ENCODE measurements at regions of chr4 and their contacts with region 1.

Region 1: DNA sequence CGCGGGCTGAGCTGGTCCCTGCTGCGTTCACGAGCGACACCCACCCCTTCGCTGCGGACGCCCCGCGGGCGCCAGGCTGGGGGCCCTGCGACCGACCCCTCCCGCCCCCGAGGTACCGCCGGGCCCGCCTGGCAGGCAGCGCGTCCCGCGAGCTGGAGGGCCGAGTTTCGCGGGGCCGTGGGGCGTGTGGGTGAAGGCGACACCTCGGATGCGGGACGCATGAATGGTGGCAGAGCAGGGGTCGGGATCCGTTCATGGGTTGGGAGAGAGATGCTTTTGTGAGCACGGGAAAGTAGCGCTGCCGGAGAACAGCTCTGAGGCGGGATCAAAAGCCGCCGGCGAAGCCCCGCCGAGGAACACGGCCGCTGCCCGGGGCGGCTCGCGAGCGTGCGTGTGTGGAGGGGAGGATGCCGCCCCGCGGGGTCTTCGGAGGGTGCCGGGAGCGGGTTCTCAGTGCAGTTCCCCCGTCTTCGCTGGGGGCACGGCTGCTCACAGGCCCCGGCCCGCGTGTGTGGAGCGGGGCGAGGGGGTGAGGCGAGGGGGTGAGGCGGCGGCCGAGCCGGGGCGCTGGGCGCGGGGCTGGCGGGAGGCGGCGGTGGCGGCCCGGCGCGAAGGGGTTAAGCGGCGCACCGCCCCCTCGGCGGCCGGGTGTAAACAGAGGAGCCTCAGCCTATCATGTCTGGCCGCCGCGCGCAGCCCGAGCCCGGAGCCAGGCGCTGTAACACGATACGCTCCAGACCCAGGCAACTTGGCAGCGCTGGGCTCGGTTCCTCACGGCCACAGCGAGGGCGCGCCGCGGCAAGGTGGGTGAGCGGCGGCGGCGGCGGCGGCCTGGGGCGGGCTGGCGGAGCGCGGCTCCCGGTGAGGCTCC is 205.3 kb downstream of the TENM3 start:
- DNase-seq: peak; percentile 93
- ATAC-seq: peak; percentile 98
- H3K4me3 ChIP-seq: peak overlapping the region; percentile 62
- H3K27ac ChIP-seq: peak overlapping the region; percentile 50
- H3K4me1 ChIP-seq: no peaks in the 10 kb centered on the region
- H3K27me3 ChIP-seq: no peaks in the 10 kb centered on the region
- CTCF ChIP-seq: no peak
- POLR2A ChIP-seq: peak; percentile 61; the same call in 1 of the 2 replicates
- RAD21 ChIP-seq: 0 out of 2 replicates have a peak, but pooled peaks have one; percentile 13

Region 2: GRCh38 chr4:181143250-181143854 is 1305.2 kb before region 1 on chr4:
- CTCF ChIA-PET with region 1: no interaction called
- POLR2A ChIA-PET with region 1: no interaction called
- dilution Hi-C with region 1: no loop called
- in situ Hi-C with region 1: no loop called
- intact Hi-C with region 1: loop called (anchors 5 kb)
- DNase-seq: peak; percentile 72
- ATAC-seq: peak; percentile 77
- H3K4me3 ChIP-seq: no peak overlapping the region
- H3K27ac ChIP-seq: no peak overlapping the region
- H3K4me1 ChIP-seq: no peaks in the 10 kb centered on the region
- H3K27me3 ChIP-seq: no peaks in the 10 kb centered on the region
- CTCF ChIP-seq: peak; percentile 91
- POLR2A ChIP-seq: no peak
- RAD21 ChIP-seq: peak; percentile 90

Region 3: GRCh38 chr4:181569553-181569952 is 879.0 kb before region 1 on chr4:
- CTCF ChIA-PET with region 1: no interaction called
- POLR2A ChIA-PET with region 1: no interaction called
- dilution Hi-C with region 1: no loop called
- in situ Hi-C with region 1: no loop called
- intact Hi-C with region 1: loop called (anchors 10 kb)
- DNase-seq: peak; percentile 65
- ATAC-seq: peak; percentile 92
- H3K4me3 ChIP-seq: no peak overlapping the region
- H3K27ac ChIP-seq: no peak overlapping the region
- H3K4me1 ChIP-seq: peaks cover 2% of the 10 kb centered on the region; the same call in 1 of the 2 replicates
- H3K27me3 ChIP-seq: no peaks in the 10 kb centered on the region
- CTCF ChIP-seq: peak; percentile 69
- POLR2A ChIP-seq: no peak
- RAD21 ChIP-seq: peak; percentile 79

Region 4: GRCh38 chr4:181761156-181761555 is 687.4 kb before region 1 on chr4:
- CTCF ChIA-PET with region 1: no interaction called
- POLR2A ChIA-PET with region 1: no interaction called
- dilution Hi-C with region 1: no loop called
- in situ Hi-C with region 1: no loop called
- intact Hi-C with region 1: loop called (anchors 10 kb)
- DNase-seq: peak; percentile 95
- ATAC-seq: peak; percentile 83
- H3K4me3 ChIP-seq: no peak overlapping the region
- H3K27ac ChIP-seq: no peak overlapping the region
- H3K4me1 ChIP-seq: peaks cover 2% of the 10 kb centered on the region; the same call in 1 of the 2 replicates
- H3K27me3 ChIP-seq: no peaks in the 10 kb centered on the region
- CTCF ChIP-seq: no peak
- POLR2A ChIP-seq: no peak
- RAD21 ChIP-seq: peak; percentile 15; the same call in 1 of the 2 replicates

Region 5: GRCh38 chr4:181952478-181952877 is 496.0 kb before region 1 on chr4:
- CTCF ChIA-PET with region 1: no interaction called
- POLR2A ChIA-PET with region 1: no interaction called
- dilution Hi-C with region 1: no loop called
- in situ Hi-C with region 1: no loop called
- intact Hi-C with region 1: loop called (anchors 5 kb)
- DNase-seq: peak; percentile 96
- ATAC-seq: peak; percentile 85
- H3K4me3 ChIP-seq: no peak overlapping the region
- H3K27ac ChIP-seq: peak overlapping the region; percentile 39
- H3K4me1 ChIP-seq: peaks cover 6% of the 10 kb centered on the region
- H3K27me3 ChIP-seq: no peaks in the 10 kb centered on the region
- CTCF ChIP-seq: no peak
- POLR2A ChIP-seq: no peak
- RAD21 ChIP-seq: no peak

Region 6: GRCh38 chr4:182103614-182104319 is 344.7 kb before region 1 on chr4:
- CTCF ChIA-PET with region 1: no interaction called
- POLR2A ChIA-PET with region 1: no interaction called
- dilution Hi-C with region 1: no loop called
- in situ Hi-C with region 1: no loop called
- intact Hi-C with region 1: no loop called
- DNase-seq: no peak
- ATAC-seq: no peak
- H3K4me3 ChIP-seq: no peak overlapping the region
- H3K27ac ChIP-seq: no peak overlapping the region
- H3K4me1 ChIP-seq: no peaks in the 10 kb centered on the region
- H3K27me3 ChIP-seq: no peaks in the 10 kb centered on the region; the same call in 1 of the 2 replicates
- CTCF ChIP-seq: no peak
- POLR2A ChIP-seq: no peak
- RAD21 ChIP-seq: no peak

Region 7: DNA sequence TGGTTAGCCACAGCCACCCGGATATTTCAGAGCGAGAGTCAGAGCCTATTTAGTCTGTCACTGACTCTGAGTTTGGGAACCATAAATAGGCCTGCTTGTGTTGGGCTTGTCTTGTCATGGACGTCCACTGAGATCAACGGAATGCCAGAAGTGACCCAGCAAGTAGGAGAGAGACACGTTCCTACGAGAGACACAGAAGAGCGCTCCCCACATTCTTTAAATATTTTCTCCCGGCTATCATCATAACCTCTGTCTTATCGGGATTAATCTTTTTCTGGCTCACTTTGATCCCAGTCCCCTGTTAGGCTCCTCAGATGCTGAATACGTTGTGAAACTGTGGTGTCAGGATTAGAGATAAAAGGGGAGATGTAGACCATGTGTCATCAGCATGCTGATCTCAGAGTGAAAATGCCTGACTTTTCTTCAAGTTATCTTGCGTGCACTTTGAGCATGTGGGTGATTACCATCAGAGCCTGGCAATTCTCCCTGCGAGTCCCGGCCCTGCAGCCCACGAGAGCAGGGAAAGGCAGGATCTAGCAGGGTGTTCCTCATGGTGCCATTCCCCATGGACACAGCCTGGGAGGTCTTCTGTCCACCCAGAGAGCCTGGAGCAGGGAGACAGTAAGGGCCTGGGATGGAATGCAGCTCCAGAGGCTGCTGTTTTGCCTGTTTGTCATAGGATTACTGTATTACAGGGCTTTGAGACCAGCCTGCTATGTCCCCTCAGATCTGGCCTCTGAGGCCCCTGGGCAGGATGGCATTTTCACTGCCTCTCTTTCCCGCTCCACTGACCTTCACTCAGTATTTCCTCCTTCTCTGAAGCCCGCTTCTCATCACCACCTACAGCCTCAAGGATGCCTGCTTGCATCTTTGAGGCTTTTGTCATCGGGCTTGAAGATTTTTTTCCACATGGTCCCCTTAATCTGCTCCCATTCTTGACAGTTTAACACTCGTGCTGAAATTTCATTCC is 208.1 kb before region 1 on chr4:
- CTCF ChIA-PET with region 1: no interaction called
- POLR2A ChIA-PET with region 1: no interaction called
- dilution Hi-C with region 1: no loop called
- in situ Hi-C with region 1: no loop called
- intact Hi-C with region 1: loop called (anchors 5 kb)
- DNase-seq: peak; percentile 89
- ATAC-seq: peak; percentile 73
- H3K4me3 ChIP-seq: no peak overlapping the region; the same call in 1 of the 2 replicates
- H3K27ac ChIP-seq: peak overlapping the region; percentile 69
- H3K4me1 ChIP-seq: peaks cover 19% of the 10 kb centered on the region
- H3K27me3 ChIP-seq: no peaks in the 10 kb centered on the region
- CTCF ChIP-seq: no peak
- POLR2A ChIP-seq: peak; percentile 20; the same call in 1 of the 2 replicates
- RAD21 ChIP-seq: no peak; the same call in 1 of the 2 replicates

Measured in IMR-90 (cell line).